ENCODE measurements at regions of chr10 and their contacts with region 1.

Region 1: GRCh38 chr10:73495884-73496674 is at the start of gene PPP3CB:
- DNase-seq: peak in 4 of 5 donors; percentile 86 to 96 (median 87)
- H3K4me3 ChIP-seq: peak within 1 kb of the TSS; percentile 84 to 92
- H3K4me3 Mint-ChIP-seq: peak within 1 kb of the TSS; percentile 91 to 99 (median 95)
- H3K27ac ChIP-seq: peak within 1 kb of the TSS; percentile 92
- H3K27ac Mint-ChIP-seq: peak within 1 kb of the TSS; percentile 85 to 98 (median 97)
- H3K4me1 ChIP-seq: peaks cover 49% of the 10 kb centered on the region
- H3K4me1 Mint-ChIP-seq: peaks cover 38 to 63% (median 52%) of the 10 kb centered on the region in 4 donors
- H3K27me3 ChIP-seq: no peaks in the 10 kb centered on the region
- H3K27me3 Mint-ChIP-seq: no peaks in the 10 kb centered on the region
- total RNA-seq, gene PPP3CB: 47.4 to 48.1 TPM

Region 2: GRCh38 chr10:72364239-72364777 is 1131.8 kb before region 1 on chr10:
- CTCF ChIA-PET with region 1: no interaction called
- POLR2A ChIA-PET with region 1: no interaction called
- intact Hi-C with region 1: loop called (anchors 10 kb)
- DNase-seq: peak; percentile 85 to 87 (median 86)
- H3K4me3 ChIP-seq: peak overlapping the region in 1 of 2 donors; percentile 31
- H3K4me3 Mint-ChIP-seq: peak overlapping the region in 6 of 8 donors; percentile 5 to 64 (median 44)
- H3K27ac ChIP-seq: peak overlapping the region; percentile 43
- H3K27ac Mint-ChIP-seq: peak overlapping the region; percentile 56 to 92 (median 87)
- H3K4me1 ChIP-seq: peaks cover 22% of the 10 kb centered on the region
- H3K4me1 Mint-ChIP-seq: peaks cover 8 to 40% (median 24%) of the 10 kb centered on the region in 4 donors
- H3K27me3 ChIP-seq: no peaks in the 10 kb centered on the region
- H3K27me3 Mint-ChIP-seq: no peaks in the 10 kb centered on the region

Region 3: DNA sequence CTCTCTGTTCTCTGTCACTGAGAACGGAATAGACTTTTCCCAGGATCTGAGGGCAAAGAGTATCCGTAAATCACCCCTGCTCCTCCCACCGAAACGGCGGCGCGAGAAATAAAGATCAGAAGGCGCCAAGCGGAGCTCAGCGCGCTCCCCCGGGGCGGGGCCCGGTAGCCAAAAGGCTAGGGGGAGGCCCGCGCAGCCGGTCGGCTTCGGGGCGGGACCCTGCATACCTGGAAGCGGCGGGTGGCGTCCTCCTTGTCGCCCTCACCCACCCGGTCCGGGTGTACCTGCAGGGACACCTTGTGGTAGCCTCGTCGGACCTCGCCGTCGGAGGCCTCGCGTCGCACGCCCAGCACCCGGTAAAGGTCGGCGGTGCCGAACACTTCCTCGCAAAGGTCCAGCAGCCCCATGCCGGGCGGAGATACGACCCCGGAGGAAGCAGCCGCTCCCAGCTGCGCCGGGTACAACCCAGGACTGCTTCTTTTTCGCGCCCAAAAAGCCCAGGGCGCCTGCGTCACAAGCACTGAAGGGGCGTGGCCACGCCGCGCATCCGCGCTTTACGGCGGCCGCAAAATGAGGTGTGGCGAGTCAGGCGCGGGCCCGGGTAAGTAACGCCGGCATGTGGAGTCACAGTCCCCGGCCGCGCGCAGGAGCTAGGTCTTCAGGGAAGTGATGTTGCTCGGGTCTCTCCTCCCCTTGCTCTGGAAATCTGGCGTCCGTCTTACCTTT is 249.1 kb before region 1 on chr10 and contains the start of gene DNAJC9:
- CTCF ChIA-PET with region 1: interaction called, 4 read pairs
- POLR2A ChIA-PET with region 1: interaction called, 15 read pairs
- intact Hi-C with region 1: loop called (anchors 2 kb)
- DNase-seq: peak; percentile 95 to 98 (median 96)
- H3K4me3 ChIP-seq: peak within 1 kb of the TSS; percentile 53 to 87
- H3K4me3 Mint-ChIP-seq: peak within 1 kb of the TSS; percentile 96 to 99 (median 97)
- H3K27ac ChIP-seq: peak within 1 kb of the TSS; percentile 82
- H3K27ac Mint-ChIP-seq: peak within 1 kb of the TSS; percentile 94 to 99 (median 98)
- H3K4me1 ChIP-seq: peaks cover 50% of the 10 kb centered on the region
- H3K4me1 Mint-ChIP-seq: peaks cover 35 to 74% (median 56%) of the 10 kb centered on the region in 4 donors
- H3K27me3 ChIP-seq: no peaks in the 10 kb centered on the region
- H3K27me3 Mint-ChIP-seq: no peaks in the 10 kb centered on the region
- total RNA-seq, gene DNAJC9: 31.6 to 31.7 TPM

Region 4: DNA sequence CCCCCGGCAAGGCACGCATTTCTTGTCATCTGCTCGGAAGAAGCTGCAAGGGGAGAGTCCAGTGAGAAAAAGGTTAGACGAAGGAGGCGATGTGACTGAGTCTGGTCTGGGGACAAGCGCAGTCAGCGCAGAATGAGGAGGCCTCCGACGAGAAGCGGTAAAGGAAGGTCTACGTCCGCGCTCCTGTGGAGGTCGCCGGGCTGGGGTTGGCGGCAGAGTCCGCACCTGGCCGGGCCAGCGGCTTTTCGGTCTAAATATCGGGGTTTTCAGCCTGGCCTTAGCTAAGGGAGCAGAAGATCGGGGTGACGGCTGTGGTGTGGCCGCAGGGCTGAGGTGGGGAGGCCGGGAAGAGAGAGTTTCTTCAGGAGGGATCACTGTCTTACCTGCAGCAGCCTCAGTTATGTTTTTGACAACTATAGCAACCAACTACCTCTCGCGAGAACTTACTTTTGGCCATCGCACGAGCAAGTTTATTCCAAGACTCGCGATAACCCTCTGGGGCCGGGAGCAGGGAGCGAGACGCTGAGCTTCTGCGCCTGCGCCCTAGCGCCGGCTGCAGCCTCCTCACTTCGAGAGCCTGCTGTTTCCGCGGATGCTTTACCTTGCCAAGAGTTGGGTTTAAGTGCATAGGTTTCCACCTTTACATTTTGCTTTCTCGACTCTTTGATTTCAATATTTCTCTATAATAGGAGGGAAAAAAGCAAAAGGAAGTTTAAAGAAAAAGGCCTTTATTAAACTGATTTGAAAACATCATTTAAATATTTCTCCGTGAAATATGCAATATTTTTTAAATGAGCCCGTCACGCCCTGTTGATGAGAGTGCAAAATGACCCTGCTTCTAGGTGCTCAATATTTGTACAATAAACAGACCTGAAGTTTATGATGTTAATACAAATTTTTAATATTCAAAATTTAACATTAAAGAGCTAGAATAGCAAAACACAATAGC is 137.5 kb before region 1 on chr10 and contains the start of gene CFAP70:
- CTCF ChIA-PET with region 1: interaction called, 3 read pairs
- POLR2A ChIA-PET with region 1: interaction called, 15 read pairs
- intact Hi-C with region 1: loop called (anchors 1 kb)
- DNase-seq: peak; percentile 92 to 96 (median 96)
- H3K4me3 ChIP-seq: peak within 1 kb of the TSS; percentile 38 to 60
- H3K4me3 Mint-ChIP-seq: peak within 1 kb of the TSS; percentile 94 to 98 (median 97)
- H3K27ac ChIP-seq: peak within 1 kb of the TSS; percentile 80
- H3K27ac Mint-ChIP-seq: peak within 1 kb of the TSS; percentile 91 to 99 (median 99)
- H3K4me1 ChIP-seq: peaks cover 12% of the 10 kb centered on the region
- H3K4me1 Mint-ChIP-seq: peaks cover 9 to 21% (median 17%) of the 10 kb centered on the region in 4 donors
- H3K27me3 ChIP-seq: no peaks in the 10 kb centered on the region
- H3K27me3 Mint-ChIP-seq: peaks cover 0 to 4% of the 10 kb centered on the region in 2 donors
- total RNA-seq, gene CFAP70: 3.8 to 5.6 TPM

Region 5: DNA sequence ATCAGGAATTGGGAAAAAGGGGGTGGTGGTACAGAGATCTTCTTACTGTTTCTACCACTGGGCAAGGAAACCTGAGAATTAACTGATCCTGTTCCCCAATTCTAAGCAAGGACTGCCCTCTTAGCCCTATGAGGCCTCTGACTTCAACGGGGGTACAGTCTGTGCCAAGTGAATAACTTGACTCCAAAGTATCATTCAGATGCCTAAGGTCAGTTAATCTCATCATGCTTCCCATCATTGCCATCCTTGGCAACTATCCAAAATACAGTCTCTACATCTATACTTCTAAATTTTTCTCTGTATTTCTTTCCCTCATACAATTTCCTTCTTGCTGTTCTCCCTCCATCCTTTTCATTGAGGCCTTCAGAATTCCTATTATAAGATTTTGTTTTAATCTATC is 10.8 kb before region 1 on chr10:
- CTCF ChIA-PET with region 1: no interaction called
- POLR2A ChIA-PET with region 1: interaction called, 12 read pairs
- intact Hi-C with region 1: no loop called
- DNase-seq: no peak
- H3K4me3 ChIP-seq: no peak overlapping the region
- H3K4me3 Mint-ChIP-seq: no peak overlapping the region
- H3K27ac ChIP-seq: no peak overlapping the region
- H3K27ac Mint-ChIP-seq: peak overlapping the region in 2 of 7 donors; percentile 22 to 83
- H3K4me1 ChIP-seq: peaks cover 23% of the 10 kb centered on the region
- H3K4me1 Mint-ChIP-seq: peaks cover 27 to 46% (median 36%) of the 10 kb centered on the region in 4 donors
- H3K27me3 ChIP-seq: no peaks in the 10 kb centered on the region
- H3K27me3 Mint-ChIP-seq: no peaks in the 10 kb centered on the region

Region 6: DNA sequence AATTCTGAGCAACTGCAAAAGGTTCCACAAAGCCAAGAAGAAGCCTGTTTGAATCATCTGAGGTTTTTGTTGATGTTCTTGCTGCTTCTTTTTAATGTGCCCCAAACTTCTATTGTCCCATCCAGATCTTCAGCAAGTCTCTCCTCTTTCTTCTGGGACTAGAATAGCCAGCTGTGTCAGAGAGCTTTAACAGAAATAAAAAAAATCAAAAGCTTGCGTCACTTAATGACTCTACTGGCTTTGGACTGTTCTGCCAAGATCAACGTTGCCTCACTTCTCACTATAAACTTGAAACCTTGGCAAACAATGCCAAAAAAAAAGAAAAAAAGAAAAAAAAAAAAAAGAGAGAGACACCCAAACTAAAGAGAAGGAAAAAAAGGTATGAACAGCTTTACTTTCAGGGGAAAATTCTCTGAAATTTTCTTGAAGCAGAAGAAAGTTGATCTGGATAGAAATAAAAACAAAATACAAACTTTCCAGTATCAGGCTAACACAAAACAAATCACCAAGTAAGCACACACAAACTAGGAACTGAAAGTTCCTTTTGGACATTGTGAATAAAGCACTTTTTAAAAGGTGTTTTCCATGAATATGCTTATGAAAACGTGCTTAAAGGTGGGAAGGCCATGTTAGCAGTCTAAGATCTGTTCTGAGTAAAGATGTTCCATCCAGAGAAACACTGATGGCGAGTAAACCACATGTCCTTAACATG is 80.3 kb after region 1 on chr10:
- CTCF ChIA-PET with region 1: no interaction called
- POLR2A ChIA-PET with region 1: no interaction called
- intact Hi-C with region 1: no loop called
- DNase-seq: no peak
- H3K4me3 ChIP-seq: no peak overlapping the region
- H3K4me3 Mint-ChIP-seq: no peak overlapping the region
- H3K27ac ChIP-seq: no peak overlapping the region
- H3K27ac Mint-ChIP-seq: no peak overlapping the region
- H3K4me1 ChIP-seq: no peaks in the 10 kb centered on the region
- H3K4me1 Mint-ChIP-seq: no peaks in the 10 kb centered on the region
- H3K27me3 ChIP-seq: no peaks in the 10 kb centered on the region
- H3K27me3 Mint-ChIP-seq: no peaks in the 10 kb centered on the region

Region 7: DNA sequence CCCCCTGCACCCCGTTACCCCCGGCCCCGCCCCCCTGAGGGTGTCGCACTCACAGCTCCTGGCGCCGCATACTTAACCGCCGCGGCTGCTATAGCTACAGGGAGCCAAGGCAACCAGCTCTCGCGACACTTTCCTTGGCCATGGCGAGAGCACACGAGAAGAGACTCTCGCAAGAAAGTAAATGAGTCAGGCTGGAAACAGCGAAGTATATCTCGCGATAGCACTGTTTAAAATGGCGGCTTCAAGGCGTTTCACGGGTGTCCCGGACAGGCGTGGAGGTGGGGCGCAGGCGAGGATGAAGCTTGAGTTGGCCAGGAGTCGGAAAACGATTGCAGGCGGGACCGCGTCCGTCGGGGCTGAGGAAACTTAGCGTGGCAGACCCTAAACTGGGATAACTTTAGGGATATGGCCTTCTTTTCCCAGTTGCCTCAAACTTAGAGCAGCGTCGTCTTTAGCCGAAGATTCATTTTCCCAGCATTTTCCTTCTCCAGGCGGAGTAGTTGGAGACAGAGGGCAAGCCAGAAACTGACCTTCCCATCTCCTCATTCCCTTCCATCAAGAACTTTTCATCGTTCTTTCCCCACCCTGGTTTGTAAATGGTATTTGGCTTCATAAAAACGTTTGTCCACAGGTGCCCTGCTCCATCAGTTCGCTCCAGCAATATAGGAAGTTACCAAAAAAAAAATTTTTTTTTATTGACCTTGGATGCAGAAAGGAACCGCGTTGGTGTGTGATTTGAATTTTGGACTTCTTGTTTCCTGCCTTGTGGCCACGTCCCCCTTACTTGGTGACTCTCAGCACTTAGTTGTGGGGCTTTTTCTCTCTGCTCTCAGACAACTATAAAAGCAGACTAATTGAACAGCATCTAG is 130.0 kb after region 1 on chr10:
- CTCF ChIA-PET with region 1: no interaction called
- POLR2A ChIA-PET with region 1: interaction called, 26 read pairs
- intact Hi-C with region 1: loop called (anchors 2 kb)
- DNase-seq: peak; percentile 92 to 97 (median 94)
- H3K4me3 ChIP-seq: peak overlapping the region; percentile 74 to 95
- H3K4me3 Mint-ChIP-seq: peak overlapping the region; percentile 90 to 99 (median 96)
- H3K27ac ChIP-seq: peak overlapping the region; percentile 76
- H3K27ac Mint-ChIP-seq: peak overlapping the region; percentile 82 to 100 (median 98)
- H3K4me1 ChIP-seq: peaks cover 16% of the 10 kb centered on the region
- H3K4me1 Mint-ChIP-seq: peaks cover 5 to 26% (median 16%) of the 10 kb centered on the region in 4 donors
- H3K27me3 ChIP-seq: no peaks in the 10 kb centered on the region
- H3K27me3 Mint-ChIP-seq: no peaks in the 10 kb centered on the region

Region 8: DNA sequence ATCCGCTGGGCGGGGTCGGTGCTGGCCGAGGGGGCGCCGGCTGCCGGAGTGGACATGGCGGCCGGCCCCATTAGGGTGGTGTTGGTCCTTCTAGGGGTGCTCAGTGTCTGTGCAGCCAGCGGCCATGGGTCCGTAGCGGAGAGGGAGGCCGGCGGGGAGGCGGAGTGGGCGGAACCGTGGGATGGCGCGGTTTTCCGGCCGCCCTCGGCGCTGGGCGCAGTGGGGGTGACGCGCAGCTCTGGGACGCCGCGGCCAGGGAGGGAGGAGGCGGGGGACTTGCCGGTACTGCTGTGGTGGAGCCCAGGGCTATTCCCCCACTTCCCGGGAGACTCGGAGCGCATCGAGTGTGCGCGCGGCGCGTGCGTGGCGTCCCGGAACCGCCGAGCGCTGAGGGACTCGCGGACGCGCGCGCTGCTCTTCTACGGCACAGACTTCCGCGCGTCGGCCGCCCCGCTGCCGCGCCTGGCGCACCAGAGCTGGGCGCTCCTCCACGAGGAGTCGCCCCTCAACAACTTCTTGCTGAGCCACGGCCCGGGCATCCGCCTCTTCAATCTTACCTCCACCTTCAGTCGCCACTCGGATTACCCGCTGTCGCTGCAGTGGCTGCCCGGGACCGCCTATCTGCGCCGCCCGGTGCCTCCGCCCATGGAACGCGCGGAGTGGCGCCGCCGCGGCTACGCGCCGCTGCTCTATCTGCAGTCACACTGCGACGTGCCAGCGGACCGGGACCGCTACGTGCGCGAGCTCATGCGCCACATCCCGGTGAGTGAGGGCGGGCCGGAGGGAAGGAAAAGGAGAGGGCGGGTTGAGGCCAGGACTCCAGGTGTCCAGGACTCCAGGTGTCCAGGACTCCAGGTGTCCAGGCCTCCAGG is 276.4 kb after region 1 on chr10:
- CTCF ChIA-PET with region 1: no interaction called
- POLR2A ChIA-PET with region 1: interaction called, 9 read pairs
- intact Hi-C with region 1: loop called (anchors 10 kb)
- DNase-seq: peak; percentile 82 to 88 (median 86)
- H3K4me3 ChIP-seq: peak overlapping the region; percentile 92 to 95
- H3K4me3 Mint-ChIP-seq: peak overlapping the region; percentile 93 to 99 (median 96)
- H3K27ac ChIP-seq: peak overlapping the region; percentile 86
- H3K27ac Mint-ChIP-seq: peak overlapping the region; percentile 84 to 98 (median 96)
- H3K4me1 ChIP-seq: peaks cover 62% of the 10 kb centered on the region
- H3K4me1 Mint-ChIP-seq: peaks cover 36 to 83% (median 50%) of the 10 kb centered on the region in 4 donors
- H3K27me3 ChIP-seq: no peaks in the 10 kb centered on the region
- H3K27me3 Mint-ChIP-seq: no peaks in the 10 kb centered on the region